Naive thymus-derived CD4-positive, alpha-beta T cell (primary cell): ENCODE measurements at regions of chr1 and their contacts with region 1.

Region 1: GRCh38 chr1:89657886-89658285 is 25.0 kb downstream of the LRRC8C start:
- DNase-seq: peak in 7 of 9 donors; percentile 46 to 80 (median 68)
- ATAC-seq: peak; percentile 86
- H3K4me3 ChIP-seq: peak overlapping the region; percentile 18
- H3K4me3 Mint-ChIP-seq: peak overlapping the region; percentile 36 to 78 (median 66)
- H3K27ac ChIP-seq: peak overlapping the region; percentile 50
- H3K27ac Mint-ChIP-seq: peak overlapping the region; percentile 79 to 91 (median 84)
- H3K4me1 ChIP-seq: peaks cover 65 to 94% of the 10 kb centered on the region in 2 donors
- H3K4me1 Mint-ChIP-seq: peaks cover 47 to 94% (median 89%) of the 10 kb centered on the region in 7 donors
- H3K27me3 ChIP-seq: no peaks in the 10 kb centered on the region
- H3K27me3 Mint-ChIP-seq: no peaks in the 10 kb centered on the region

Region 2: DNA sequence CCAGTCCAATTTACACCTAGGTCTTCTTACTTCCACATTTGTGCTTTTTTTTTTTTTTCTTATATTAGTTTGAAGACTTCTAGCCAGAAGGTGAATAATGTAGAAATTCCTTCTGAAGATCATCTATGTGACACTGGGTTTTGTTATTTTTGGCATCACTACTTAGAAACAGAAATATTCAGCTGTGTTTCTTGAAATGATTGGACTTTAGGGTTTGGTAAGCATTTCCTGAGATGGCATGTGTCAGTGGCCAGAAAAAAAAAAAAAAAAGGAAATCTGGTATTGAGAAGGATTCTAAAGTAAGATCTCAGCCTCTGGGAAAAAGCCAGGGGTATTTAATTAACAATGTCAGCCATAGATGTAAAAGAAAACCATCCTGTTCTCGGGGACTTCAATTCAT is 68.4 kb before region 1 on chr1:
- CTCF ChIA-PET with region 1: no interaction called
- POLR2A ChIA-PET with region 1: no interaction called
- intact Hi-C with region 1: no loop called
- DNase-seq: no peak
- ATAC-seq: no peak
- H3K4me3 ChIP-seq: no peak overlapping the region
- H3K4me3 Mint-ChIP-seq: no peak overlapping the region
- H3K27ac ChIP-seq: no peak overlapping the region
- H3K27ac Mint-ChIP-seq: peak overlapping the region in 6 of 9 donors; percentile 1 to 57 (median 32)
- H3K4me1 ChIP-seq: peaks cover 0 to 1% of the 10 kb centered on the region in 2 donors
- H3K4me1 Mint-ChIP-seq: peaks cover 26 to 77% (median 70%) of the 10 kb centered on the region in 7 donors
- H3K27me3 ChIP-seq: no peaks in the 10 kb centered on the region
- H3K27me3 Mint-ChIP-seq: no peaks in the 10 kb centered on the region

Region 3: GRCh38 chr1:89641781-89642180 is 16.1 kb before region 1 on chr1:
- CTCF ChIA-PET with region 1: interaction called, 3 read pairs
- POLR2A ChIA-PET with region 1: interaction called, 38 read pairs
- intact Hi-C with region 1: loop called in 1 of 2 experiments (anchors 1 kb)
- DNase-seq: no peak
- ATAC-seq: no peak
- H3K4me3 ChIP-seq: no peak overlapping the region
- H3K4me3 Mint-ChIP-seq: peak overlapping the region in 8 of 10 donors; percentile 13 to 64 (median 40)
- H3K27ac ChIP-seq: no peak overlapping the region
- H3K27ac Mint-ChIP-seq: peak overlapping the region in 7 of 9 donors; percentile 2 to 68 (median 49)
- H3K4me1 ChIP-seq: peaks cover 9 to 32% of the 10 kb centered on the region in 2 donors
- H3K4me1 Mint-ChIP-seq: peaks cover 39 to 79% (median 75%) of the 10 kb centered on the region in 7 donors
- H3K27me3 ChIP-seq: no peaks in the 10 kb centered on the region
- H3K27me3 Mint-ChIP-seq: no peaks in the 10 kb centered on the region

Region 4: GRCh38 chr1:89692601-89693521 is 35.0 kb after region 1 on chr1:
- CTCF ChIA-PET with region 1: no interaction called
- POLR2A ChIA-PET with region 1: interaction called, 4 read pairs
- intact Hi-C with region 1: loop called (anchors 5 kb)
- DNase-seq: no peak
- ATAC-seq: peak; percentile 34
- H3K4me3 ChIP-seq: no peak overlapping the region
- H3K4me3 Mint-ChIP-seq: peak overlapping the region in 7 of 10 donors; percentile 2 to 78 (median 37)
- H3K27ac ChIP-seq: no peak overlapping the region
- H3K27ac Mint-ChIP-seq: peak overlapping the region; percentile 37 to 88 (median 72)
- H3K4me1 ChIP-seq: peaks cover 38 to 50% of the 10 kb centered on the region in 2 donors
- H3K4me1 Mint-ChIP-seq: peaks cover 46 to 98% (median 90%) of the 10 kb centered on the region in 7 donors
- H3K27me3 ChIP-seq: no peaks in the 10 kb centered on the region
- H3K27me3 Mint-ChIP-seq: no peaks in the 10 kb centered on the region

Region 5: GRCh38 chr1:89706700-89707012 is 48.8 kb after region 1 on chr1:
- CTCF ChIA-PET with region 1: no interaction called
- POLR2A ChIA-PET with region 1: no interaction called
- intact Hi-C with region 1: loop called in 1 of 2 experiments (anchors 2 kb)
- DNase-seq: no peak
- ATAC-seq: no peak
- H3K4me3 ChIP-seq: no peak overlapping the region
- H3K4me3 Mint-ChIP-seq: no peak overlapping the region
- H3K27ac ChIP-seq: no peak overlapping the region
- H3K27ac Mint-ChIP-seq: peak overlapping the region in 5 of 9 donors; percentile 2 to 82 (median 32)
- H3K4me1 ChIP-seq: peaks cover 4 to 5% of the 10 kb centered on the region in 2 donors
- H3K4me1 Mint-ChIP-seq: peaks cover 22 to 57% (median 40%) of the 10 kb centered on the region in 7 donors
- H3K27me3 ChIP-seq: no peaks in the 10 kb centered on the region
- H3K27me3 Mint-ChIP-seq: no peaks in the 10 kb centered on the region